ENCODE measurements at regions of chr4 and their contacts with region 1.

Region 1: GRCh38 chr4:184424993-184425758 is 49.2 kb downstream of the IRF2 start:
- DNase-seq: no peak

Region 2: DNA sequence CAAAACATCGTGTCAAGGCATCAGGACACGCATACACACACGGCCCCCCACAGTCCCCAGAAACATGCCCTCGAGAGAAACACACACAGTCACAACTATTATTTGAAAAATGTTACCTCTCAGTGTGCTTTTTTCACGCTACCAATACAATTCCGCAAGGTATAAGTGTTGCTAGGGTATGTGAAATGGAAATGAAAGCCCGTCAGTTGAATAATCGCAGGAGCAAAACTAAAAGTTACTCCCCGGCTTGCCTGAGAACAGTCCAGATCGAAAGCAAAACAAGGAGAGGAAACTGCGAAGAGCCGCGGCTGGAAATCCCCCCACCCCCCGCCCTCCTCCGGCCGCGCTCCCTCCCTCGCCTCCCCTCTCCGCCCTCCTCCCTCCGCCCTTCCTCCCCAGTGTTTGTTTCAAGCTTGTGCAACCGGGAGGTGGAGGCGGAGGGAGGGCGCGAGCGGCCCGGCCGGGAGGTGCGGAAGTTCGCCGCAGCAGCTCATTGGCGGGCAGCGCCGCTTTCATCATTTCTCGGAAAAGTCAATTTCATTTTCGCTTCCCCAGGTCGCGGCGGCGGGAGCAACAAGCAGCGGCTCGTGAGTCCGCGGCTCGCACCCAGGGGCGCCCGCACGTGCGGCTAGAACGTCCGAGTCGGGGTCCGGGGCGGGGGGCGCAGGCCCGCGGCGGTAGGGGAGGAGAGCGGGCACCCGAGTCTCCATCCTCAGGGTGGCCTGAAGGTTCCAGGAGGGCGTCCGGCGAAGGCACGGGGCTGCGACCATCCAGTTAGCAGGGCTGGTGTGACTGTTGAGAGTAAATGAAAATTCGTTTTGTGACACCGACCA is 49.3 kb after region 1 on chr4 and contains the start of gene IRF2:
- intact Hi-C with region 1: no loop called
- DNase-seq: peak; percentile 99
- total RNA-seq, gene IRF2: 25.1 to 29.4 TPM

Region 3: DNA sequence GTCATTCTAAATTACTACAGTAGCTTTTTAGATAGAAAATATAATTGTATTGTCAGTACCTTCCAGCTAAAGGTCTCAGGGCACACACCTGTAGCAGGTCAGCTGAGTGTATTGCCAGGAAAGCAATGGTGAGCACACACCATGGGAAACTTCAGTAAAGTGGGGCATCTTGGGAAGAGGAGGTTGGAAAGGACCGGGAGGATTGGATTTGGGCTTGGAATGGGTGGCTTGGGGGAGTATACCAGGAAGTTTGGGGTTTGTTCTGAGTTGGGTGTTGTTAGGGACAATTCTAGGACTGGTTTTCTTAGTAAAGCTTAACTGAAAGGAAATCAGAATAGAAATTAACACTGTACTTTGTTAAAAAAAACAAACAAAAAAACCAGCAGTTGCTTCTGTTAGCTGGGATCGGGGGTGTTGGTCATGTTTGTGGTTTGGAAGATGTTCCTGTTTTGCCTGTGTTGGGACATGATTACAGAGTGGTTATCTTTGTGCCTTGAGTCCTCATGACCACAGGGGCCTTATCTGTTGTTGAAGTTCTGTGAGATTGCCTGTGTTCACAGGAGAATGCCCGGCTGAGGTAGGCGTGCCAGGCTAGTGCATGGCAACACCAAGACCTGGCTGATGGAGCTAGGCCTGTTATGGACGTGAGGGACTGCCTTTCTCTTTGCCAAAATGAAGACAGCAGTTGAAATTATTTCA is 259.5 kb after region 1 on chr4:
- intact Hi-C with region 1: loop called in 1 of 2 experiments (anchors 5 kb)
- DNase-seq: no peak